Activated T-helper 2 cell treated with anti-CD3 and anti-CD28 coated beads, Interferon-gamma antibody, Interleukin-2, Interleukin-4, amounts not matched to agents 10 μg/mL and 5 μg/mL and 100 μg/mL, durations not matched to agents 14 hours and 24 hours and 36 hours (primary cell): ENCODE measurements at regions of chr3 and their contacts with region 1.

Region 1: DNA sequence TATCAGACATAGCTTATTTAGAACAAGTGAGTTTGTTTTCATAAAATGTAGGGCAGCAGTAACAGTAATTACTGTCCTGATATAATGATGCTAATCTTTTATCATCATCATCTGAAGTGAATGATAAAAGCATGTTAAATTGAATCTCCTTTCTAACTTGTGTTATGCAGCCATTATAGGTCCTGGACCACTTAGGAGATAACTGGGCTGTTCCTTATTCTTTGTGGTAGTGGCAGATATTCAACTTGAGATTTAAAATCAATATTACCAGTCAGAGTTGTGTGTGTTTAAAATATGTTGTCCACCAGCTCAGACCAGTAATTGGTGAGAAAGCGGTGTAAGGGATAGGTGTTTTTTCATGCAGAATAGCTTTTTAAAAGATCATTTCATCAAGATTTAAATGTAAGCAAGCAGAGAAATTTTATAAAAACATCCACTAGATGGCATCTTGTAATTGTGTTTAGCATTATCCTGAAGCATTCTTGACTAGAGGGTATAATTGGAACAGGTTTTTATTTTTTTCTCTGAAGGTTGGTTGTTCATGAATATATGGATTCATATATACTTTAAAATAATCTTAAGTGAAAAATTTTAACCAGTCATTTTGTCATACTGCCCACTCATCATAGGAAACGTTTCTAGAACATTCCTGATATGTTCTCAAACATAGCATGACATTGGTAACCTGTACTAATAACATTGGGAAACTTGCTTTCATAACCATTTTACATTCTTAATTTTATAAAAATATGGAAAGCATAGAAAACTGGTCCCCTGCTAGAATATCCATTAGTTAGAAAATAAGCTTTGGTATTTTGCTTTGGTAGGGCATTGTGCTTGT is 153.9 kb downstream of the BBX start:
- DNase-seq: no peak
- H3K4me3 Mint-ChIP-seq: no peak overlapping the region
- H3K27ac Mint-ChIP-seq: no peak overlapping the region
- H3K4me1 Mint-ChIP-seq: peaks cover 27% of the 10 kb centered on the region
- H3K27me3 Mint-ChIP-seq: no peaks in the 10 kb centered on the region

Region 2: GRCh38 chr3:107740992-107741896 is 64.6 kb after region 1 on chr3:
- intact Hi-C with region 1: loop called (anchors 5 kb)
- DNase-seq: no peak
- H3K4me3 Mint-ChIP-seq: no peak overlapping the region
- H3K27ac Mint-ChIP-seq: no peak overlapping the region
- H3K4me1 Mint-ChIP-seq: no peaks in the 10 kb centered on the region
- H3K27me3 Mint-ChIP-seq: no peaks in the 10 kb centered on the region

Region 3: DNA sequence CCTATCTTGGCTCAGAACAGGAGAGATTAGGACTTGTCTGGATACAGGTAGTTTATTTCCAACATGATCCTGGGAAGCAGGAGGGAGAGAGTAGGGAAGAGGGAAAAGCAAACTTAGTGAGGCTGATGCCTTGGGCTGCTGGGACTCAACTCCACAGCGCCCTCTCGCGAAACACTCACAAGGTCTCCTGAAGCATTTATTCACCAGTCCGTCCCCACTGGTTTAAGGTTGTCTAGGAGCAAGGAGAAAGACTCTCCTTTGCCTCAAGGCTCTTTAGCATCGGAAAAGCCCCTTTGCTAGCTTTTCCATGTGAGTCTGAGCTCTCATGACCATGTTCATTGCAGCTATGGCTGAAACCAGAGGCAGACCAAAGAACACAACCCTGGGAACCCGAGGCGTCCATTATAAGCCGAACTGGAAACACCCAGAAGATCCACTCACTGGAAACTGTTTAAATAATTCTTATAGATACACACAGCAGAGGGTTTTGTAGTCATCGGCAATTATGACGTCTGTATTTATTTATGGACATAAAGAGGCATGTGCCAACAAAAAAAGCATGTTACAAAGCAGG is 169.7 kb after region 1 on chr3:
- intact Hi-C with region 1: loop called (anchors 10 kb)
- DNase-seq: no peak
- H3K4me3 Mint-ChIP-seq: no peak overlapping the region
- H3K27ac Mint-ChIP-seq: no peak overlapping the region
- H3K4me1 Mint-ChIP-seq: peaks cover 4% of the 10 kb centered on the region
- H3K27me3 Mint-ChIP-seq: no peaks in the 10 kb centered on the region

Region 4: GRCh38 chr3:107927361-107928083 is 250.8 kb after region 1 on chr3:
- intact Hi-C with region 1: loop called (anchors 10 kb)
- DNase-seq: peak; percentile 56
- H3K4me3 Mint-ChIP-seq: peak overlapping the region; percentile 90
- H3K27ac Mint-ChIP-seq: peak overlapping the region; percentile 77
- H3K4me1 Mint-ChIP-seq: peaks cover 15% of the 10 kb centered on the region
- H3K27me3 Mint-ChIP-seq: peaks cover 14% of the 10 kb centered on the region

Region 5: GRCh38 chr3:108477511-108478147 is 800.9 kb after region 1 on chr3:
- intact Hi-C with region 1: loop called (anchors 10 kb)
- DNase-seq: peak; percentile 36
- H3K4me3 Mint-ChIP-seq: no peak overlapping the region
- H3K27ac Mint-ChIP-seq: no peak overlapping the region
- H3K4me1 Mint-ChIP-seq: peaks cover 1% of the 10 kb centered on the region
- H3K27me3 Mint-ChIP-seq: peaks cover 12% of the 10 kb centered on the region

Region 6: DNA sequence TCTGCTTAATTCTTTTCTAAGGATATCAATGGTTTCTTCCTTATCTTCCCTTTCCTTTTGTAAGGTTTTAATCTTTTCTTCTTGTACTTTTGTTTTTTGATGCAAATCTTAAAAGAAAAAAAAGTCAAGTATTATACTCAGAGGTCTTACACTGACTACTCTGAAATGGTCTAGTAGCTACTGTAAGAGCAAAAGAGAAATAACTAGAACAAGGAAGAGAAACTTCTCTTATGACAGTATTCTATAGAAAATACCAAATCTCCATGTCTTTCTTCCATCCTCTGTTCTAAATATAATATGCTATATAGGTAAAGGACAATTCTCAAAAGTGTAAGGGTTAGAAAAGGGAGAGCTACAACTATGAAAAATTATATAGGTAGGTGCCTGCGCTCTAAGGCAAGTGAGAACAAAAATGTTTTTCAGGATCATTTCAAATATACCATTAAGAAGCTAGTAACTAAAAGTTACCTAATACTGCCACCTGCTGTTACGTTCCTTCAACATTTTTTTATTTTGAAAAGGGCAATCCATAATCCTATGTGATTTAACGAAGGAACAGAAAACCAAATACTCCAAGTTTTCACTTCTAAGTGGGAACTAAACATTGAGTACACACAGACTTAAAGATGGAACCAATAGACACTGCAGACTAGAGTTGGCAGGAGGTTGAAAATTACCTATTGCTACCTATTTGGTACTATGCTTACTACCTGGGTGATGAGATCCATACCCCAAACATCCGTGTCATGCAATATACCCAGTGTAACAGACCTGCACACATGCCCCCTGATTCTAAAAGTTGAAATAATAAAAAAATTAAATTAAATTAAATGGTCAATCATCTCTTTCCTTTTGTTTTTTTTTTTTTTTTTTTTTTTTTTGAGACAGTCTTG is 875.8 kb after region 1 on chr3:
- intact Hi-C with region 1: loop called (anchors 10 kb)
- DNase-seq: no peak
- H3K4me3 Mint-ChIP-seq: no peak overlapping the region
- H3K27ac Mint-ChIP-seq: no peak overlapping the region
- H3K4me1 Mint-ChIP-seq: peaks cover 10% of the 10 kb centered on the region
- H3K27me3 Mint-ChIP-seq: no peaks in the 10 kb centered on the region